ENCODE measurements at regions of chr2 and their contacts with region 1.

Region 1: GRCh38 chr2:74066518-74067203 is 81.1 kb downstream of the BOLA3 start:
- DNase-seq: no peak
- ATAC-seq: peak; percentile 47

Region 2: GRCh38 chr2:73896362-73897239 is 170.1 kb before region 1 on chr2:
- intact Hi-C with region 1: no loop called
- DNase-seq: no peak
- ATAC-seq: peak; percentile 43

Region 3: GRCh38 chr2:74036450-74037195 is 30.0 kb before region 1 on chr2:
- intact Hi-C with region 1: no loop called
- DNase-seq: no peak
- ATAC-seq: no peak

Region 4: GRCh38 chr2:74304332-74305148 is 237.9 kb after region 1 on chr2:
- intact Hi-C with region 1: loop called (anchors 5 kb)
- DNase-seq: no peak
- ATAC-seq: peak; percentile 38